Common myeloid progenitor, CD34-positive (primary cell): ENCODE measurements at regions of chr3 and their contacts with region 1.

Region 1: GRCh38 chr3:67113802-67114407 is 115.8 kb downstream of the KBTBD8 start:
- DNase-seq: peak; percentile 73 to 91 (median 87)
- H3K4me3 ChIP-seq: no peak overlapping the region
- H3K27ac ChIP-seq: no peak overlapping the region
- H3K4me1 ChIP-seq: no peaks in the 10 kb centered on the region
- H3K27me3 ChIP-seq: no peaks in the 10 kb centered on the region

Region 2: DNA sequence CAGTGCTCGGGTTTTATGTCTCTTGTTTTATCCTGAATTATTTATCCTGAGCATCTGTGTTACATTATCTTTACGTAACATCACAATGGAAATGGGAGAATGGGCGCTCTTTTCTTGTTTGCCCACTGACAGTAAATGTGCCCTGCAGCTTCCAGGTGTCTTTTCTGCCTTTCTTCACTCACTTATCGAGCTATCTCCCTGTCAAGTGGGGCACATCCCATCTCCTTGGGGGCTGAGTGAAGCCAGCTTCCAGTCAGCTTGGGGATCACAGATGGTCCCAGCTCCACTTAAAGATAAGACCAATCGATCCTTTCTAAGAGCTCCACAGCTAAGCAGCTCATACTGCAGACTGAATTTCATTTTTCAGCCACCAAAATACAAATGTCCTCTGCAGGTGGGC is 10.0 kb after region 1 on chr3:
- CTCF ChIA-PET with region 1: no interaction called
- POLR2A ChIA-PET with region 1: no interaction called
- DNase-seq: no peak
- H3K4me3 ChIP-seq: no peak overlapping the region
- H3K27ac ChIP-seq: no peak overlapping the region
- H3K4me1 ChIP-seq: no peaks in the 10 kb centered on the region
- H3K27me3 ChIP-seq: peaks cover 0 to 2% (median 0%) of the 10 kb centered on the region in 5 experiments

Region 3: DNA sequence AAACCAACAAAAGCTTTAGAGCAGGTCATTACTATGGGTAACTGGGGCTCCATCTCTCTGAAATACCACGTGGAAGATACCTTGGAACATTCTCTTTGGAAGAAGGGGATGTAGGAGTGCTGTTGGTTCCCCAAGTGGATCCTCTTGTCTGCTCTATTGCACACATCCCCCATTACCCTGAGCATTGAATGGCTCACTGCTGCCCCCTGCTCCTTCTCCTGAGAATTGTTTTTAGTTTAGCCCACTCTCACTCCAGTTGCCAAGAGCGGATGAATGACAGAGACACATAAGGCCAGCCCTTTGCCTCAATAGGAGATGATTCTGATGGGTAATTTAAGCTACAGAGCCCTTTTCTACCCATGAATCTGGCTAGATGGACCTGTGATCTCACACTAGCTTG is 676.1 kb after region 1 on chr3:
- CTCF ChIA-PET with region 1: interaction called, 14 read pairs
- POLR2A ChIA-PET with region 1: no interaction called
- DNase-seq: peak; percentile 30 to 63 (median 45)
- H3K4me3 ChIP-seq: no peak overlapping the region
- H3K27ac ChIP-seq: no peak overlapping the region
- H3K4me1 ChIP-seq: no peaks in the 10 kb centered on the region
- H3K27me3 ChIP-seq: peaks cover 0 to 14% (median 4%) of the 10 kb centered on the region in 5 experiments